ENCODE measurements at regions of chr19 and their contacts with region 1.

Region 1: GRCh38 chr19:58182989-58183816 is at the start of gene ZNF274:
- DNase-seq: peak; percentile 88 to 95 (median 93)
- ATAC-seq: peak; percentile 92
- H3K4me3 ChIP-seq: peak within 1 kb of the TSS; percentile 87
- H3K4me3 Mint-ChIP-seq: peak within 1 kb of the TSS; percentile 91 to 99 (median 94)
- H3K27ac ChIP-seq: peak within 1 kb of the TSS; percentile 97
- H3K27ac Mint-ChIP-seq: peak within 1 kb of the TSS; percentile 98 to 100 (median 99)
- H3K4me1 ChIP-seq: peaks cover 0 to 12% of the 10 kb centered on the region in 2 donors
- H3K4me1 Mint-ChIP-seq: peaks cover 10 to 24% (median 17%) of the 10 kb centered on the region in 7 donors
- H3K27me3 ChIP-seq: no peaks in the 10 kb centered on the region
- H3K27me3 Mint-ChIP-seq: no peaks in the 10 kb centered on the region
- total RNA-seq, gene ZNF274: 20.1 to 91.1 (median 52.7) TPM

Region 2: GRCh38 chr19:57240311-57241090 is 942.7 kb before region 1 on chr19 and contains the start of gene ZNF805:
- CTCF ChIA-PET with region 1: no interaction called
- POLR2A ChIA-PET with region 1: interaction called, 3 read pairs
- intact Hi-C with region 1: loop called in 1 of 2 experiments (anchors 1 kb)
- DNase-seq: peak; percentile 82 to 96 (median 93)
- ATAC-seq: peak; percentile 97
- H3K4me3 ChIP-seq: peak within 1 kb of the TSS; percentile 73
- H3K4me3 Mint-ChIP-seq: peak within 1 kb of the TSS; percentile 88 to 97 (median 94)
- H3K27ac ChIP-seq: peak within 1 kb of the TSS; percentile 95
- H3K27ac Mint-ChIP-seq: peak within 1 kb of the TSS; percentile 96 to 99 (median 97)
- H3K4me1 ChIP-seq: peaks cover 19% of the 10 kb centered on the region in 2 donors
- H3K4me1 Mint-ChIP-seq: peaks cover 20 to 44% (median 36%) of the 10 kb centered on the region in 7 donors
- H3K27me3 ChIP-seq: no peaks in the 10 kb centered on the region
- H3K27me3 Mint-ChIP-seq: peaks cover 0 to 3% (median 0%) of the 10 kb centered on the region in 5 donors
- total RNA-seq, gene ZNF805: 12.0 to 26.2 (median 23.7) TPM

Region 3: GRCh38 chr19:57477191-57478008 is 705.8 kb before region 1 on chr19 and contains the start of gene ZNF772:
- CTCF ChIA-PET with region 1: no interaction called
- POLR2A ChIA-PET with region 1: no interaction called
- intact Hi-C with region 1: loop called in 1 of 2 experiments (anchors 1 kb)
- DNase-seq: peak; percentile 55 to 96 (median 88)
- ATAC-seq: peak; percentile 99
- H3K4me3 ChIP-seq: peak within 1 kb of the TSS; percentile 80
- H3K4me3 Mint-ChIP-seq: peak within 1 kb of the TSS; percentile 87 to 95 (median 92)
- H3K27ac ChIP-seq: peak within 1 kb of the TSS; percentile 77
- H3K27ac Mint-ChIP-seq: peak within 1 kb of the TSS; percentile 84 to 96 (median 89)
- H3K4me1 ChIP-seq: peaks cover 5 to 12% of the 10 kb centered on the region in 2 donors
- H3K4me1 Mint-ChIP-seq: peaks cover 10 to 26% (median 19%) of the 10 kb centered on the region in 7 donors
- H3K27me3 ChIP-seq: no peaks in the 10 kb centered on the region
- H3K27me3 Mint-ChIP-seq: peaks cover 0 to 7% (median 0%) of the 10 kb centered on the region in 5 donors
- total RNA-seq, gene ZNF772: 1.5 to 20.5 (median 4.3) TPM

Region 4: DNA sequence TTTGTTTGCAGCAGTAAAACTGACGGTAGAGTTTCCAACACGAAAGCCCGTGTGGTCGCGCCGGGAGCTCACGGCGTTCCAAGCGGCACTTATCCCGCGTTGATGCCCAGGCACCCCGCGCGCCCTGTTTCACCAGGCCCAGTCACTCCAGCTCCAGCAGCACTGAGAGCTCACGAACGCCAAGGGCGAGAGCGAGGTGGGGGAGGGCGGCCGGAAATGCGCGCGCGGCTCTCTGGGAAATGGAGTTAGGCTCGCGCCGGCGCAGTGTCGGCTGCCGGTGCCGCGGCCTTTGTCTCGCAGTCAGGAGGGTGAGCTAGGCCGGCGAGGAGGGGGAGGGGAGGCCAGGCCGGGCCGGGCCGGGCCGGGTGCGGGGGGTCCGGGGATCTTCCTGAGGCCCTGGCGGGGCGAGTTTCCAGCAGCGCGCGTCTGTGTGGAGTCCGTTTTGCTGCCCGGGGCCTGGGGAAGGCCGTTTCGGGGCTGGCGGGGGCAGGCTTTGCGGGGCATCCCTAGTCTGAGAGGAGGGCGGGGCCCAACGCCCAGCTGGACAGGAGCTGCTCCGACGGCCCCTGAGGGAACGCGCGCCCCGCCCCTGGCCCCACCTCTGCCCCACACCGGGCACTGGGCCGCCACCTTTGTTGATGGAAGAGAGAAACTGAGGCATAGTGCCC is 124.1 kb before region 1 on chr19 and contains the start of gene ZNF135:
- CTCF ChIA-PET with region 1: no interaction called
- POLR2A ChIA-PET with region 1: no interaction called
- intact Hi-C with region 1: no loop called
- DNase-seq: peak in 8 of 9 donors; percentile 34 to 77 (median 57)
- ATAC-seq: peak; percentile 91
- H3K4me3 ChIP-seq: peak within 1 kb of the TSS; percentile 39
- H3K4me3 Mint-ChIP-seq: peak within 1 kb of the TSS; percentile 33 to 91 (median 84)
- H3K27ac ChIP-seq: peak within 1 kb of the TSS; percentile 73
- H3K27ac Mint-ChIP-seq: peak within 1 kb of the TSS in 6 of 9 donors; percentile 68 to 88 (median 82)
- H3K4me1 ChIP-seq: no peaks in the 10 kb centered on the region
- H3K4me1 Mint-ChIP-seq: peaks cover 0 to 12% (median 6%) of the 10 kb centered on the region in 7 donors
- H3K27me3 ChIP-seq: no peaks in the 10 kb centered on the region
- H3K27me3 Mint-ChIP-seq: peaks cover 2 to 29% (median 19%) of the 10 kb centered on the region in 5 donors
- total RNA-seq, gene ZNF135: 0.07 to 2.9 (median 2.5) TPM

Region 5: DNA sequence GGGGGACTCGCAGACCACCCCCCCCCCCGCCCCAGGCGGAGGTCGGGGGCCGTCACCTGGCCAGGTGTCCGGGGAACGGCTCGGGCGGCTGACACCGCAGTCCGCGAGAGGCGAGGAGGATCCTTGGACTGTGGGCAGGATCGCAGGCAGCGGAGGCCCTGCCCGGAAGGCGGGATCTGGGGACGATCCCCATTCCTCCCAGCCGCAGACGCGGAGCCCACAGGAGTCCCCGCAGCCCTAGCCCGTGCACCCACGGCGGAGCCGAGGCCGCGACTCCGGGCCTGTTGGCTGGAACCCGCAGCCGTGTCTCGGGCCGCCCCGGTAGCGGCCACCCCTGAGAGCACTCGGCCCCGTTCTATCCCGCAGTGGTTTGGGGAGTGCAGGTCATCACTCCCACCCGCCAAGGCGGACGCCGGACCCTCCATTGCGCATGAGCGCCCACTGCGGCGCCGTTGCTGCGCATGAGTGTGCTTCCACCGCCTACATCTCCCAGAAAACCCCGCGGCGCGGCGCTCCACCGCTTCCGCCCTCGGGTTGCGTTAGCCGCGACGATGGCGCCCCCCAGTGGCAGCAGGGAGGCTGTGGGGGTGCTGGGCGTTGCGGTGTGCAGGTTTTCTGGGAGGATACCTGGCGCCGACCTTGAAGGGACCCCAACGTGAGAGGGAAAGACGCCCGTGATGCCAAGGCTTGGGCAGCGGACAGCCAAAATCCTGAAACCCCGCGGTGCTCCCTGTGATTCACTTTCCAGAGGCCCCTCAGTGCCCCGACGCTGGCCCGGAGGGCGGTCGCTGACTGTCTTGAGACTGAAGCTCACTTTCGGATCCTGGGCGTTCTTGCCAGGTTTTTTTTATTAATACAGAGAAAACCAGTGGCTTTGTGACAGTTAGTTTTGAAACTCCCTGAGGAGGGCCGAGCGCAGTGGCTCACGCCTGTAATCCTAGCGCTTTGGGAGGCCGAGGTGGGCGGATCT is 28.2 kb before region 1 on chr19:
- CTCF ChIA-PET with region 1: no interaction called
- POLR2A ChIA-PET with region 1: interaction called, 4 read pairs
- intact Hi-C with region 1: loop called in 1 of 2 experiments (anchors 1 kb)
- DNase-seq: peak; percentile 92 to 100 (median 98)
- ATAC-seq: peak; percentile 98
- H3K4me3 ChIP-seq: peak overlapping the region; percentile 97
- H3K4me3 Mint-ChIP-seq: peak overlapping the region; percentile 72 to 90 (median 84)
- H3K27ac ChIP-seq: peak overlapping the region; percentile 99
- H3K27ac Mint-ChIP-seq: peak overlapping the region; percentile 52 to 80 (median 73)
- H3K4me1 ChIP-seq: peaks cover 8 to 13% of the 10 kb centered on the region in 2 donors
- H3K4me1 Mint-ChIP-seq: peaks cover 6 to 33% (median 19%) of the 10 kb centered on the region in 7 donors
- H3K27me3 ChIP-seq: no peaks in the 10 kb centered on the region
- H3K27me3 Mint-ChIP-seq: no peaks in the 10 kb centered on the region

Region 6: GRCh38 chr19:58326914-58327726 is 143.9 kb after region 1 on chr19 and contains the start of gene ZSCAN22:
- CTCF ChIA-PET with region 1: no interaction called
- POLR2A ChIA-PET with region 1: interaction called, 8 read pairs
- intact Hi-C with region 1: loop called (anchors 1 kb)
- DNase-seq: peak; percentile 65 to 89 (median 78)
- ATAC-seq: peak; percentile 90
- H3K4me3 ChIP-seq: peak within 1 kb of the TSS; percentile 95
- H3K4me3 Mint-ChIP-seq: no peak within 1 kb of the TSS
- H3K27ac ChIP-seq: peak within 1 kb of the TSS; percentile 72
- H3K27ac Mint-ChIP-seq: no peak within 1 kb of the TSS
- H3K4me1 ChIP-seq: peaks cover 14 to 16% of the 10 kb centered on the region in 2 donors
- H3K4me1 Mint-ChIP-seq: peaks cover 0 to 10% (median 6%) of the 10 kb centered on the region in 7 donors
- H3K27me3 ChIP-seq: no peaks in the 10 kb centered on the region
- H3K27me3 Mint-ChIP-seq: no peaks in the 10 kb centered on the region
- total RNA-seq, gene ZSCAN22: 1.1 to 6.0 (median 4.5) TPM

Region 7: DNA sequence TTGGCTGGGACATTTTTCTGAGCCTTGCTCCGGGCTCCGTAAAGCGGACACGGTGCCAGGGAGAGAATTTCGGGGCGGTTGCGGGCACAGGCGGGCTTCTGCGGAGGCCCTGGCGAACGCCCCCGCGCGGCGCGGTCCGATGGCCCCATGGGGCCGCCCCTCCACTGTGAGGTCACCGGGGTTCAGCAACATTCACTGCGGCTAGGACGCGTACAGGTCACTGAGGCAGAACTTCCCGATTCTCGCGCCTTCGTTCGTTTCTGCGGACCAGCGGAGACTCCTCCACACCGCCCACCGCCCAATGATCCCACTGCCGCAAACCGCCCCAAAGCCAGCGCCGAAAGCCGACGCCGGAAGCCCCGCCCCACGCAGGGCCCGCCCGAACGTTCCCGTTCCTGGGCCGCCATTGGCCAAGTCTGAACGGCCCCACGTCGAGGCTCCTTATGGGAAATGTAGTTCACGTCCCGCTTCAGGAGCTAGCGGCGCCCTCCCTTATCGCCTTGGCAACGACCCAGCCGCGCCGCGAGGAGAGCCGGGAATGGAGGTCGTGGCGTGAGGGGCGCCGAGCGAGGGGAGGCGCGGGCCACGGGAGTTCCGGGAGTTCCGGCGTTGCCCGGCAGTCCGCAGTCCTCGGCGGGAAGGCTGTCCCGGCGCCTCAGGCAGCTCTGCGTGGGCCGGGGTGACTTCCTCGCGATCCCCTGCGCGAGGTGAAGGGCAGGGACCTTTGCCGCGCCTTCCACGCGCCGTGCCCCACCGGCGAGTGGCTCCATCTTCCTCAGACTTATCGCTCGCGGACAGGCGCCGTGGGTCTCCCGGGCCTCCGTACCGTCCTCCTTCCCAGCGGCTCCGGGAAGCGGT is 225.2 kb after region 1 on chr19 and contains the start of gene ZNF584:
- CTCF ChIA-PET with region 1: no interaction called
- POLR2A ChIA-PET with region 1: no interaction called
- intact Hi-C with region 1: loop called (anchors 1 kb)
- DNase-seq: peak; percentile 86 to 94 (median 92)
- ATAC-seq: peak; percentile 98
- H3K4me3 ChIP-seq: peak within 1 kb of the TSS; percentile 96
- H3K4me3 Mint-ChIP-seq: peak within 1 kb of the TSS; percentile 82 to 98 (median 95)
- H3K27ac ChIP-seq: peak within 1 kb of the TSS; percentile 87
- H3K27ac Mint-ChIP-seq: peak within 1 kb of the TSS; percentile 83 to 95 (median 93)
- H3K4me1 ChIP-seq: peaks cover 12 to 15% of the 10 kb centered on the region in 2 donors
- H3K4me1 Mint-ChIP-seq: peaks cover 5 to 45% (median 34%) of the 10 kb centered on the region in 7 donors
- H3K27me3 ChIP-seq: no peaks in the 10 kb centered on the region
- H3K27me3 Mint-ChIP-seq: no peaks in the 10 kb centered on the region
- total RNA-seq, gene ZNF584: 4.2 to 12.1 (median 8.8) TPM

Region 8: DNA sequence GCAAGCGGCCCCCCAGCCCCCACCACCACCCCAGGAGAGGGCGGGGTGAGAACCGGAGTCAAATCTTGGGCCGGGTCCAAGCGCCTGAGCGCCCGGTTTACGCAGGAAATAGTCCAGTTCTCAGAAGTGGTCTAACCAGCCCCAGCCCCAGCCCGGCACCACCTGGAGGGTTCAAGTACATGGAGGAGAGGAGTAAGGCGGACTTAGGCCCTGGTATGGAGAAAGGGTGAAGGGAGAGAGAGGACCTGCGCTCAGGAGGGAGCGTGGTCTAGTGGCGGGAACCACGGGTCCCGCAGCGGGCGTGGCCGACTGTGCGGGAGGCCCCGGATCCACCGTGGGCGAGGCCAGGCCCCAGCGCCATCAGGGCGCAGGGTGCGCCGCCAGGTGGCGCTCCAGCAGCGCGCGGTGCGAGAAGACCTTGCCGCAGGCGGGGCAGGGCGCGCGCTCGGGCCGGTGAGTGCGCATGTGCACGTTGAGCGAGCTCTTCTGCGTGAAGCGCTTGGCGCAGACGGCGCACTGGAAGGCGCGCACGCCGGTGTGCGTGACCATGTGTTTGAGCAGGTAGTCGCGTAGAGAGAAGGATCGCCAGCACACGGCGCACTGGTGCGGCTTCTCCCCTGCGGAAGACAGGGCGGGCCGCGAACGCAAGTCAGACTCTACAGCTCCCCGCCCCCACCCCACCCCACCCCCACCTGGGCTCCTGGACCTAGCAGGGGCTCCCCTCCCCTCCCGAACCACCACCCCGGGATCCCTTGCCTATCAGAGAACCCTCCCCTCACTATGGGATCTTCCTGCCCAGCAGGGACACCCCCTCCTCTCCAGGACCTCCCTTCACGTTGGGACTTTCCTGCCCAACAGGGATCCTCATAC is 330.7 kb after region 1 on chr19:
- CTCF ChIA-PET with region 1: no interaction called
- POLR2A ChIA-PET with region 1: interaction called, 3 read pairs
- intact Hi-C with region 1: loop called (anchors 1 kb)
- DNase-seq: peak; percentile 91 to 99 (median 95)
- ATAC-seq: peak; percentile 98
- H3K4me3 ChIP-seq: peak overlapping the region; percentile 39
- H3K4me3 Mint-ChIP-seq: peak overlapping the region; percentile 73 to 93 (median 84)
- H3K27ac ChIP-seq: peak overlapping the region; percentile 65
- H3K27ac Mint-ChIP-seq: peak overlapping the region; percentile 67 to 94 (median 85)
- H3K4me1 ChIP-seq: peaks cover 17 to 21% of the 10 kb centered on the region in 2 donors
- H3K4me1 Mint-ChIP-seq: peaks cover 17 to 40% (median 27%) of the 10 kb centered on the region in 7 donors
- H3K27me3 ChIP-seq: no peaks in the 10 kb centered on the region
- H3K27me3 Mint-ChIP-seq: no peaks in the 10 kb centered on the region